ENCODE measurements at regions of chr22 and their contacts with region 1.

Region 1: GRCh38 chr22:19536564-19536963 is 12.4 kb upstream of the CLDN5 start:
- DNase-seq: no peak
- ATAC-seq: no peak
- H3K4me3 ChIP-seq: no peak overlapping the region
- H3K27ac ChIP-seq: no peak overlapping the region
- H3K4me1 ChIP-seq: no peaks in the 10 kb centered on the region
- H3K27me3 ChIP-seq: peaks cover 56 to 59% of the 10 kb centered on the region in 2 experiments; a peak in 4 of 5 replicates
- CTCF ChIP-seq: no peak
- EP300 ChIP-seq: no peak
- POLR2A ChIP-seq: no peak
- RAD21 ChIP-seq: no peak

Region 2: DNA sequence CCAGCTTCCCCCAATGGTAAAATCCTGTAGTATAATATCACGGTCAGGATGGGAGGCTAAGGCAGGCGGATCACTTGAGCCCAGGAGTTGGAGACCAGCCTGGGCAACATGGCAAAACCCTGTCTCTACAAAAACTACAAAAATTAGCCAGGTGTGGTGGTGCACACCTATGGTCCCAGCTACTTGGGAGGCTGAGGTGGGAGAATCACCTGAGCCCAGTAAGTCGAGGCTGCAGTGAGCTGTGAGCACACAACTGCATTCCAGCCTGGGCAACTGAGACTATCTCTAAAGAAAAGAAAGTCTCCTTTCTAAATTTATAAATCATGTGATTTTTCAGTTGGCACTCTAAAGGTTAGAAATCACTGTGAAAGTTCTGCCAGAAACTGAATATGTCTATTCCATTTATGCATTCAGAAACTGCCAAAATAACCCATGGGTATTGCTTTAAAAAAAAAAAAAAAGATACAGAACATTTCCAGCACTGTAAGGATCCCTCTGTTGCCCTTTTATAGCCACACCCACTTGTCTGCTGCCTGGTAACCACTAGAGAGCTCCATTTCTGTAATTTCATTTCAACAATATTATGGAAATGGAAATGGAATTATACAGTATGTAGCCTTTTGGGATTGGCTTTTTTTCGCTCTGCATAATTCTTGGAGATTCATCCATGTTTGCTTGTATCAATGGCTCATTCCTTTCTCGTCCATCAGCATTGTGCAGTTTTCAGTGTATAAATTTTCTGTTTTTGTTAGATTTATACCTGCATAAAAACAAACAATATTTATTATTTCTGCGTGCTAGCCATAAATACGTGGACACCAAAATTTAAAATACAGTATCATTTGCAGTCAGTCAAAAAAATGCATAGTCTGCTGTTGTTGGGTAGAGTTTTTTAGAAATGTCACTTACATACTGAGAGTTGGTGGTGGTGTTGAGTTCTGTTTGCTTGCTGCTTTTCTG is 47.4 kb before region 1 on chr22:
- CTCF ChIA-PET with region 1: no interaction called
- POLR2A ChIA-PET with region 1: no interaction called
- in situ Hi-C with region 1: no loop called
- intact Hi-C with region 1: no loop called
- DNase-seq: peak in 3 of 4 experiments; percentile 57 to 84 (median 83)
- ATAC-seq: peak; percentile 75
- H3K4me3 ChIP-seq: no peak overlapping the region
- H3K27ac ChIP-seq: no peak overlapping the region
- H3K4me1 ChIP-seq: no peaks in the 10 kb centered on the region
- H3K27me3 ChIP-seq: no peaks in the 10 kb centered on the region
- CTCF ChIP-seq: peak in 2 of 3 experiments; percentile 33 to 63; a peak in 2 of 6 replicates
- EP300 ChIP-seq: no peak
- POLR2A ChIP-seq: 0 out of 2 replicates have a peak, but pooled peaks have one; percentile 48
- RAD21 ChIP-seq: peak; percentile 33 to 57

Region 3: GRCh38 chr22:19523240-19524169 is 13.1 kb before region 1 on chr22:
- CTCF ChIA-PET with region 1: no interaction called
- POLR2A ChIA-PET with region 1: interaction called, 16 read pairs
- in situ Hi-C with region 1: no loop called
- intact Hi-C with region 1: no loop called
- DNase-seq: peak in 2 of 4 experiments; percentile 42 to 56
- ATAC-seq: no peak
- H3K4me3 ChIP-seq: no peak overlapping the region
- H3K27ac ChIP-seq: no peak overlapping the region
- H3K4me1 ChIP-seq: peaks cover 0 to 52% of the 10 kb centered on the region in 2 experiments; a peak in 3 of 5 replicates
- H3K27me3 ChIP-seq: peaks cover 19 to 23% of the 10 kb centered on the region in 2 experiments; a peak in 4 of 5 replicates
- CTCF ChIP-seq: no peak
- EP300 ChIP-seq: no peak
- POLR2A ChIP-seq: no peak; the same call in 1 of the 2 replicates
- RAD21 ChIP-seq: no peak

Region 4: GRCh38 chr22:19591568-19591967 is 55.0 kb after region 1 on chr22:
- CTCF ChIA-PET with region 1: no interaction called
- POLR2A ChIA-PET with region 1: no interaction called
- in situ Hi-C with region 1: no loop called
- intact Hi-C with region 1: no loop called
- DNase-seq: peak in 1 of 4 experiments; percentile 43
- ATAC-seq: no peak
- H3K4me3 ChIP-seq: no peak overlapping the region
- H3K27ac ChIP-seq: no peak overlapping the region
- H3K4me1 ChIP-seq: peaks cover 0 to 1% of the 10 kb centered on the region in 2 experiments; a peak in 1 of 5 replicates
- H3K27me3 ChIP-seq: peaks cover 74 to 75% of the 10 kb centered on the region in 2 experiments
- CTCF ChIP-seq: no peak
- EP300 ChIP-seq: no peak
- POLR2A ChIP-seq: no peak
- RAD21 ChIP-seq: no peak

Region 5: GRCh38 chr22:19779685-19780268 is 243.2 kb after region 1 on chr22:
- CTCF ChIA-PET with region 1: no interaction called
- POLR2A ChIA-PET with region 1: no interaction called
- in situ Hi-C with region 1: no loop called
- intact Hi-C with region 1: no loop called
- DNase-seq: peak in 2 of 4 experiments; percentile 56 to 63
- ATAC-seq: peak; percentile 17
- H3K4me3 ChIP-seq: no peak overlapping the region
- H3K27ac ChIP-seq: peak overlapping the region; percentile 75
- H3K4me1 ChIP-seq: peaks cover 20 to 44% of the 10 kb centered on the region in 2 experiments
- H3K27me3 ChIP-seq: 0 out of 5 replicates have a peak, but pooled peaks cover 0 to 2% of the 10 kb centered on the region in 2 experiments
- CTCF ChIP-seq: 0 out of 6 replicates have a peak, but pooled peaks of 1 of the 3 experiments have one; percentile 3
- EP300 ChIP-seq: no peak
- POLR2A ChIP-seq: no peak
- RAD21 ChIP-seq: no peak

Region 6: GRCh38 chr22:20463324-20464095 is 926.9 kb after region 1 on chr22:
- CTCF ChIA-PET with region 1: no interaction called
- POLR2A ChIA-PET with region 1: no interaction called
- in situ Hi-C with region 1: no loop called
- intact Hi-C with region 1: no loop called
- DNase-seq: no peak
- ATAC-seq: no peak
- H3K4me3 ChIP-seq: no peak overlapping the region
- H3K27ac ChIP-seq: no peak overlapping the region
- H3K4me1 ChIP-seq: peaks cover 0 to 3% of the 10 kb centered on the region in 2 experiments; a peak in 2 of 5 replicates
- H3K27me3 ChIP-seq: peaks cover 15 to 25% of the 10 kb centered on the region in 2 experiments; a peak in 4 of 5 replicates
- CTCF ChIP-seq: no peak
- EP300 ChIP-seq: no peak
- POLR2A ChIP-seq: no peak
- RAD21 ChIP-seq: no peak

Measured in K562 (cell line).